Mammary epithelial cell (primary cell): ENCODE measurements at regions of chr5 and their contacts with region 1.

Region 1: DNA sequence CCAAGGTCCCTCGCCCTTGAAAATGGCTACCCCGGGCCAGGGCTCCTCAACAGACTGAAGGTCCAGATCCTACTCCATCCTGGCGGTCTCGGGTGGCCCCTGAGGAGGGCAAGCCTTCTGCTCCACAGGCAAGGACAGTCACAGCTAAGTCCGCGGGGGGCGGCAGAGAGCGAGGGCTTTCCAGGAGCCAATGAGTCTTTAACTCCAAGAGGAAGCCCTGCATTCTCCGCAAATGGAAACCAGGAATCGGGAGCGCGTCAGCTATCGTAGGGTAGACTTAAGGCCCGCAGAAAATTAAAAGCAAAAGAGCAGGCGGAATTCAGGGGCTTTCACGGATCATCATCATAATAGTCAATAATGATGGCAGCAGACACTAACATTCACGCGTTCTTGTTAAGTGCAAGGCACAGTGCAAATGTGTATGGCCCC is 87.8 kb upstream of the TNFAIP8 start:
- DNase-seq: peak; percentile 82
- H3K4me3 ChIP-seq: peak overlapping the region; percentile 60 to 83 (median 73)
- H3K27ac ChIP-seq: peak overlapping the region; percentile 76
- H3K4me1 ChIP-seq: peaks cover 13% of the 10 kb centered on the region
- H3K27me3 ChIP-seq: no peaks in the 10 kb centered on the region
- CTCF ChIP-seq: peak; percentile 22 to 34

Region 2: GRCh38 chr5:118844351-118844750 is 423.6 kb before region 1 on chr5:
- CTCF ChIA-PET with region 1: no interaction called
- dilution Hi-C with region 1: no loop called
- in situ Hi-C with region 1: no loop called
- intact Hi-C with region 1: no loop called
- DNase-seq: no peak
- H3K4me3 ChIP-seq: no peak overlapping the region
- H3K27ac ChIP-seq: no peak overlapping the region
- H3K4me1 ChIP-seq: no peaks in the 10 kb centered on the region
- H3K27me3 ChIP-seq: no peaks in the 10 kb centered on the region
- CTCF ChIP-seq: no peak

Region 3: DNA sequence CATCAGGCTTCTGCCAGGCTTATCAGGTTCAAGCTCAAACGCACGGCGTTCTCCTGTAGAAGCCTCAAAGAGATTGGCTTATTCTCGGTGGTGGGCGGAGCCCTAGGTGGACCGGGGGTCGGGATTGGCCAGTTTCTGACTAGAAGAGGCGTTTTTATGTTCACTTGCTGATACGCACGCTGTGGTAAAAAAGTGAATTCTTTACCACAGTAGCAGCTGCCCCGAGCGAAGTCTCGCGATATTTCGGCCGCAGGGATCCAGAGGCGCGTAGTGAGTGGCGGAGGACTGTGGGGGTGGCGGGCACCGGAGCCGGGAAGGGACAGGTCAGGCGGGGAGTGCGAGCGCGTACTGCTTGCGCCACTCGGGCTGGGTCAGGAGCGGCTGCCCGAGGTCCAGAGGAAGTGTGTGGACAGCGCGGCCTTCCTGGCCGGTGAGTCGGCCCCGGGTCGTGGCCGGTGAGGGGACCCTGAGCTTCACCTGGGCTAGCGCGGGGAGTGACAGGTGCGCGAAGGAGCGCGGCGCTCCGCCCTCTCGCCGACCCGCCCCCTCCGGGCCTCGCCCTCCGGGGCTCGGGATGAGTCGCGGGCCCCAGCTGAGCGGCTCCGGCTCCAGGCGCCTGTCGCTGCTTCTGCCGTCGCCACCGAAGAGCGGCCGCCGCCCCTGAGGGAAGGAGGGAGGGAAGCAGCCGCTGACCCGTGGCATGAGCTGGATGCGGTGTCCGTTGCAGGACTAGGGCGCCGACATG is 197.0 kb before region 1 on chr5 and contains the start of gene DMXL1:
- CTCF ChIA-PET with region 1: no interaction called
- dilution Hi-C with region 1: no loop called
- in situ Hi-C with region 1: no loop called
- intact Hi-C with region 1: loop called (anchors 2 kb)
- DNase-seq: peak; percentile 99
- H3K4me3 ChIP-seq: peak within 1 kb of the TSS; percentile 94 to 98 (median 98)
- H3K27ac ChIP-seq: peak within 1 kb of the TSS; percentile 92
- H3K4me1 ChIP-seq: peaks cover 8% of the 10 kb centered on the region
- H3K27me3 ChIP-seq: no peaks in the 10 kb centered on the region
- CTCF ChIP-seq: no peak
- total RNA-seq, gene DMXL1: 26.0 to 62.2 TPM

Region 4: GRCh38 chr5:119243898-119244297 is 24.1 kb before region 1 on chr5:
- CTCF ChIA-PET with region 1: no interaction called
- dilution Hi-C with region 1: no loop called
- in situ Hi-C with region 1: no loop called
- intact Hi-C with region 1: no loop called
- DNase-seq: peak; percentile 14
- H3K4me3 ChIP-seq: no peak overlapping the region
- H3K27ac ChIP-seq: no peak overlapping the region
- H3K4me1 ChIP-seq: no peaks in the 10 kb centered on the region
- H3K27me3 ChIP-seq: no peaks in the 10 kb centered on the region
- CTCF ChIP-seq: no peak

Region 5: DNA sequence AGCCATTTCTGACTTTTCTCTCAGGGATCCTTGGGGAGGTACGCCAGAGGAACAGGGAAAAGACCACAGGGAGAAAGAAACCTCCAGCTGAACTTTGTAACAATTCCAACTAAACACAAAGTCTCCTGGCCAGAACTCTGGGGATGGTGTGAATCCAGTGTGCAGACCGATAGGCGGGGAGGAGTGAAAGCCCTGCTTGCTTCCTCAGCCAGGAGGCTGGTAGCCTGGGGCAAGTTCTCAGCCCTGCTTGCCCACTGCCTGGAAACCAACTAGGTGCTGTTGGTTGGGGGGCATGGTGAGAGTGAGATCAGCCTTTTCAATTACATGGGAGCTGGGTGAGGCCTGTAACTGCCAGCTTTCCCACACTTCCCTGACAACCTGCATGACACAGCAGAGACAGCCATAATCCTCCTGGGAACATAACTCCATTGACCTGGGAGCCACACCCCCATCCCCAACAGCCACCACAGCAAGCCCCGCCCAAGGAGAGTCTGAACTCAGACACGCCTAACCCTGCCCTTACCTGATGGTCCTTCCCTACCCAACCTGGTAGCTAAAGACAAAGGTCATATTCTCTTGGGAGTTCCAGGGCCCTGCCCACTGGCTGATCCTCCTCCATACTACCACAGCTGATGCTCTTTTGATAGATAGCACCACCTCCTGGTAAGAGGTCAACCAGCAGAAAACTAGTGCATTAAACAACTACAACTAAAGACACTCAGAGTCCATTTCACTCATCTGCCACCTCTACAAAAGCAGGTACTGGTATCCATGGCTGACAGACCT is 12.2 kb before region 1 on chr5:
- CTCF ChIA-PET with region 1: interaction called, 13 read pairs
- dilution Hi-C with region 1: no loop called
- in situ Hi-C with region 1: no loop called
- intact Hi-C with region 1: no loop called
- DNase-seq: peak; percentile 57
- H3K4me3 ChIP-seq: no peak overlapping the region
- H3K27ac ChIP-seq: peak overlapping the region; percentile 3
- H3K4me1 ChIP-seq: peaks cover 10% of the 10 kb centered on the region
- H3K27me3 ChIP-seq: no peaks in the 10 kb centered on the region
- CTCF ChIP-seq: peak; percentile 33 to 48

Region 6: GRCh38 chr5:119302916-119303897 is 35.2 kb after region 1 on chr5:
- CTCF ChIA-PET with region 1: no interaction called
- dilution Hi-C with region 1: no loop called
- in situ Hi-C with region 1: no loop called
- intact Hi-C with region 1: loop called (anchors 2 kb)
- DNase-seq: peak; percentile 97
- H3K4me3 ChIP-seq: no peak overlapping the region
- H3K27ac ChIP-seq: peak overlapping the region; percentile 82
- H3K4me1 ChIP-seq: peaks cover 40% of the 10 kb centered on the region
- H3K27me3 ChIP-seq: no peaks in the 10 kb centered on the region
- CTCF ChIP-seq: no peak

Region 7: DNA sequence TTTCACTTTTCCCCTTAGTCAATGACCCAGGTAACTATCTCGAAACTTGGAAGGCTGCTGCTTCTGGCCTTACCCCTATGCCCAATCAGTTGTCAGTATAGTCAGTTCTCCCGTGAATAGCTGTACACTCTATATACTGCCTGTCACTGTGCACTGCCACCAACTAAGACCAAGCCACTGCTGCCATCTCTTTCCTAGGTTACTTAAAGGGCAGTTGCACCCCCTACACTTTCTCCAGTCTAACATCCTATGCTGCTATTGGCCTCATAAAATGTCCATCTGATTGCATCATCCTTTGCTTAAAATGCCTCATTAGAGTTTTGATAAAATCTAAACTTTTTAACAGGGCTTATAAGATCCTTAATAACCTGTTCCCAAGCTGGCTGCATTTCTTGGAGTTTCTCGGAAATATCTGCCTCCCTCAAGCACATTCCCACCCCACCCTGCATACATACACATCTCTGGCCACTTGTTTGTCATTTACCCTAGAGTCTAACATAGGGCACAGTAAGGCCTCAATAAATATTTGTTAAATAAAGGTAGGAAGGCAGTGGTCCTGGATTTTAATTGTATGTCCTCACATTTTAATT is 55.1 kb after region 1 on chr5:
- CTCF ChIA-PET with region 1: interaction called, 3 read pairs
- dilution Hi-C with region 1: no loop called
- in situ Hi-C with region 1: no loop called
- intact Hi-C with region 1: loop called (anchors 2 kb)
- DNase-seq: peak; percentile 19
- H3K4me3 ChIP-seq: no peak overlapping the region
- H3K27ac ChIP-seq: peak overlapping the region; percentile 93
- H3K4me1 ChIP-seq: peaks cover 38% of the 10 kb centered on the region
- H3K27me3 ChIP-seq: no peaks in the 10 kb centered on the region
- CTCF ChIP-seq: no peak

Region 8: DNA sequence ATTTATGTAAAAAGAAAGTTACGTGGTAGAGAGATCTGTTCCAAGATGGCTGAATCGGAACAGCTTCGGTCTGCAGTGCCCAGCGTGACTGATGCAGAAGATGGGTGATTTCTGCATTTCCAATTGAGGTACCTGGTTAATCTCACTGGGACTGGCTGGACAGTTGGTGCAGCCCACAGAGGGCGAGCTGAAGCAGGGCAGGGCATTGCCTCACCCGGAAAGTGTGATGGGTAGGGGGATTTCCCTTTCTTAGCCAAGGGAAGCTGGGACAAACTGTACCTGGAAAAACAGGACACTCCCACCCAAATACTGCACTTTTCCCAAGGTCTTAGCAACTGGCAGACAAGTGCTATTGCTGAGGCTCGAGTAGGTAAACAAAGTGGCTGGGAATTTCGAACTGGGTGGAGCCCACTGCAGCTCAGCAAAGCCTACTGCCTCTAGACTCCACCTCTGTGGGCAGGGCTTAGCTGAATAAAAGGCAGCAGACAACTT is 171.2 kb after region 1 on chr5:
- CTCF ChIA-PET with region 1: no interaction called
- dilution Hi-C with region 1: no loop called
- in situ Hi-C with region 1: no loop called
- intact Hi-C with region 1: no loop called
- DNase-seq: peak; percentile 69
- H3K4me3 ChIP-seq: peak overlapping the region in 2 of 3 experiments; percentile 23 to 31
- H3K27ac ChIP-seq: peak overlapping the region; percentile 30
- H3K4me1 ChIP-seq: no peaks in the 10 kb centered on the region
- H3K27me3 ChIP-seq: no peaks in the 10 kb centered on the region
- CTCF ChIP-seq: peak in 1 of 2 donors; percentile 10